Endothelial cell of umbilical vein (primary cell): ENCODE measurements at regions of chr7 and their contacts with region 1.

Region 1: DNA sequence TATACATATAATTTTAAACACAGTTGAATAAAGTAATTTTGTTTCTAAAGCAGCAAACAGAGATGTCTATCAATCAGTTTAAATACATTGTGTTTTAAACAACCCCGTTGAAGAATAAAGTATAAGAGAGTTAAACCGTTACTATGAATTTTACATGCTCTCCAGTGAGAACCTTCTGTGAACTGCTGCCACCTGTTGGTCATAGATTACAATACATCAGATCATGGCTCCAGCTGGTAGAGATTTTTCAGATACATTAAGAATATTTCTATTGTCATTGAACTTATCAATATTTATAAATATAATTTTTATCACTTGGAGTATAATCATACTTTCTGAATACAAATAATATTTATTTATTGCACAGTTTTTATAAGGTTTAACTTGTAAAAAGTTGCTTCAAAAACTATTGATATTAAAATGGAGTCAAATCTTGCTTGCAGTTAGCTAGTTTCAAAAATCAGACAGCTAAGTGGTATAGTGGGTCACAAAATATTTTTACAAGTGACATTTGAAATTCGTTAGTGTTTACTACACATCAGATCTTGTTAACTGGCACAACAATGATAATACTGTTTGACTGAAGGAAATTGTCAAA is 561.2 kb upstream of the PHF14 start:
- DNase-seq: peak; percentile 59
- H3K4me3 ChIP-seq: no peak overlapping the region
- H3K27ac ChIP-seq: no peak overlapping the region
- H3K4me1 ChIP-seq: no peaks in the 10 kb centered on the region
- H3K27me3 ChIP-seq: no peaks in the 10 kb centered on the region
- CTCF ChIP-seq: peak; percentile 32 to 43
- POLR2A ChIP-seq: no peak

Region 2: DNA sequence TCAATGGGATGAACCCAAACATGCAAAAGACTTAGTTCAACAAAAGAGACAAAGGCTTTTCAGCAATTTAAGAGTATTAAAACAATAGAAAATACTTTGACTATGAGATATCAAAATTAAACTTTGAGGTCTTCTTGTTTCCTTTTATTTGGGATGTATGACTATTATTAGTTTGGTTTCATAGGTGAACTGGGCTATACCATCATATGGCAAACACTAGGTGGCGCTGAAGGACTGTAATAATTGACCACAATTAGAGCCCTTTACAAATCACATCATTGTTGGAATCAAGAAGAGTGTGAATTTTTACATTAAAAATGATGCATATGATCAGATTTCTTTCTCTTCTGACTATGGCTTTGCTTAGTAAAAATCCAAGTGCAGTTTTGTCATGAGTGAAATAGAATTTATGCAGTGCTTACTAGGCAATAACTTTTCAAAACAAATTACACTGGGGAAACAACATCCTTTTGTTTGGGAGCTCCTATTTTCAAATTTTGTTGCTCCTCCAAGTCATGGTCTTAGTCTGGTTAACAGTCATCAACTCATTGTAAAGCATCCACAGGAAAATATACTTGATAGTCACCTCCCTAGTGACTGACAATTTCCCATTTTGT is 1993.8 kb before region 1 on chr7:
- CTCF ChIA-PET with region 1: interaction called, 19 read pairs
- POLR2A ChIA-PET with region 1: no interaction called
- dilution Hi-C with region 1: no loop called
- intact Hi-C with region 1: loop called (anchors 5 kb)
- DNase-seq: peak; percentile 56
- H3K4me3 ChIP-seq: no peak overlapping the region
- H3K27ac ChIP-seq: no peak overlapping the region
- H3K4me1 ChIP-seq: no peaks in the 10 kb centered on the region
- H3K27me3 ChIP-seq: no peaks in the 10 kb centered on the region
- CTCF ChIP-seq: peak; percentile 45 to 56
- POLR2A ChIP-seq: no peak

Region 3: DNA sequence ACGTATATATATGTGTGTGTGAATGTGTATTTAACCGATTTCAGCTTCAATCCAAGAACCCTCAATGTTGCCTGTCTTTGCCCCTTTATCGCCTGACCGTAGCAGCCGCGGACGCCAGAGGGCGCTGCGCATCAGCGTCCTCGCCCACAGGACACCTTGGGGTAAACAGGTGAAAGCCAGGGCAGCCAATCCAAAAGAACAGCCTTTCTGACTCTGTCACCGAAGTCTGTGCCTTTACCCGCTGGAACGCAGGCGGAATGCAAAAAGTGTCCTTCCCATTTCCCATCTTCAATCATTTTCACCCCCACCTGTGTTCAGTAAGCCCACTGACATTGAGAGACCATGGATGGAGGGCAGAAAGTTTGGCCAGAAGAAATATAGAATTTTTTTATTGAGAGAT is 1975.6 kb before region 1 on chr7:
- CTCF ChIA-PET with region 1: interaction called, 10 read pairs
- POLR2A ChIA-PET with region 1: no interaction called
- dilution Hi-C with region 1: no loop called
- intact Hi-C with region 1: loop called (anchors 5 kb)
- DNase-seq: peak; percentile 16
- H3K4me3 ChIP-seq: no peak overlapping the region
- H3K27ac ChIP-seq: no peak overlapping the region
- H3K4me1 ChIP-seq: no peaks in the 10 kb centered on the region
- H3K27me3 ChIP-seq: peaks cover 45 to 58% of the 10 kb centered on the region in 2 experiments
- CTCF ChIP-seq: peak; percentile 62 to 77
- POLR2A ChIP-seq: no peak

Region 4: DNA sequence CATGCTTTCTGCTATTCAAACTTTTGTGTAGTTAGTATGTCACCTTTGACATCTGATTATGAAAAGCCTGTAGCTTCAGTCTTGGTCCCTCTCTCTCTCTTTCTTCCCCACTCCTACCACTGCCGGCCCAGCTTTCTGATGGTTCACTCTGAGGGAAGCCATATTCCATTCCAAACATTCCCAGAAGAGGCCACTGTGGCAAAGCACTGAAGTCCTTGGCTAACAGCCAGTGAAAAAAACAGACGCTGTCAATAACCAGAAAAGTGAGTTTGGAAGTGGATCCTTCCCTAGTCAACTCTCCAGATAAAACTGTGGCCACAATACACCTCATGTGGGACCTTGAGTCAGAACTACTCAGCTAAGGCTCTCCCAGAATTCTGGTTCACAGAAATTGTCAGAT is 389.6 kb before region 1 on chr7:
- CTCF ChIA-PET with region 1: interaction called, 29 read pairs
- POLR2A ChIA-PET with region 1: no interaction called
- dilution Hi-C with region 1: no loop called
- intact Hi-C with region 1: loop called (anchors 1 kb)
- DNase-seq: peak; percentile 59
- H3K4me3 ChIP-seq: no peak overlapping the region
- H3K27ac ChIP-seq: no peak overlapping the region
- H3K4me1 ChIP-seq: no peaks in the 10 kb centered on the region
- H3K27me3 ChIP-seq: no peaks in the 10 kb centered on the region
- CTCF ChIP-seq: peak; percentile 25 to 52
- POLR2A ChIP-seq: no peak

Region 5: DNA sequence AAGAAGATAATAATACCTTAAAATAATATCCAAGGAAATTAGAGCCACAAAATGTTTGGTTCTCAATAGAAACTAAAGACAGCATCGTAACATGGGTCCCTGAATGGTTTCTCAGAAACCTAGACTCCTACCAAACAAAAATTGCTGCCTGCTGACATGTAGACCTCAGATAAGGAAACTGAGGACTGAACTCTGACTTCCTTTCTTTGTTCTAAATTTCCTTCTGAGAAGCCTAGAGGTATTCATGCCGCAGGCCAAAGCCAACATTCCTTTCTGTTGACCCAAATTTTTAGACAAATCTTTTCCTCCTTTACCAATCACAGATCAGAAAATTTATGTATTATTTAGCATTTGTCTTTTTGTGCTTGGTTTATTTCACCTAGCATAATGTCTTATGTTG is 255.5 kb before region 1 on chr7:
- CTCF ChIA-PET with region 1: no interaction called
- POLR2A ChIA-PET with region 1: no interaction called
- dilution Hi-C with region 1: no loop called
- intact Hi-C with region 1: loop called (anchors 10 kb)
- DNase-seq: peak; percentile 97
- H3K4me3 ChIP-seq: peak overlapping the region; percentile 19 to 95 (median 50)
- H3K27ac ChIP-seq: peak overlapping the region; percentile 99
- H3K4me1 ChIP-seq: peaks cover 18% of the 10 kb centered on the region
- H3K27me3 ChIP-seq: no peaks in the 10 kb centered on the region
- CTCF ChIP-seq: no peak
- POLR2A ChIP-seq: peak; percentile 87

Region 6: GRCh38 chr7:10325395-10325794 is 87.1 kb before region 1 on chr7:
- CTCF ChIA-PET with region 1: no interaction called
- POLR2A ChIA-PET with region 1: no interaction called
- dilution Hi-C with region 1: no loop called
- intact Hi-C with region 1: no loop called
- DNase-seq: no peak
- H3K4me3 ChIP-seq: no peak overlapping the region
- H3K27ac ChIP-seq: no peak overlapping the region
- H3K4me1 ChIP-seq: no peaks in the 10 kb centered on the region
- H3K27me3 ChIP-seq: no peaks in the 10 kb centered on the region
- CTCF ChIP-seq: no peak
- POLR2A ChIP-seq: no peak

Region 7: GRCh38 chr7:10439027-10439426 is 26.5 kb after region 1 on chr7:
- CTCF ChIA-PET with region 1: no interaction called
- POLR2A ChIA-PET with region 1: no interaction called
- dilution Hi-C with region 1: no loop called
- intact Hi-C with region 1: no loop called
- DNase-seq: no peak
- H3K4me3 ChIP-seq: no peak overlapping the region
- H3K27ac ChIP-seq: no peak overlapping the region
- H3K4me1 ChIP-seq: no peaks in the 10 kb centered on the region
- H3K27me3 ChIP-seq: no peaks in the 10 kb centered on the region
- CTCF ChIP-seq: no peak
- POLR2A ChIP-seq: no peak

Region 8: GRCh38 chr7:11343818-11344413 is 931.4 kb after region 1 on chr7:
- CTCF ChIA-PET with region 1: interaction called, 4 read pairs
- POLR2A ChIA-PET with region 1: no interaction called
- dilution Hi-C with region 1: no loop called
- intact Hi-C with region 1: loop called (anchors 5 kb)
- DNase-seq: peak; percentile 60
- H3K4me3 ChIP-seq: no peak overlapping the region
- H3K27ac ChIP-seq: no peak overlapping the region
- H3K4me1 ChIP-seq: no peaks in the 10 kb centered on the region
- H3K27me3 ChIP-seq: peaks cover 0 to 2% of the 10 kb centered on the region in 2 experiments
- CTCF ChIP-seq: peak; percentile 45 to 50
- POLR2A ChIP-seq: no peak